WTC11 (cell line): ENCODE measurements at regions of chr4 and their contacts with region 1.

Region 1: GRCh38 chr4:8267077-8267476 is 2.5 kb upstream of the HTRA3 start:
- DNase-seq: peak; percentile 78
- ATAC-seq: peak; percentile 68
- H3K4me3 Mint-ChIP-seq: no peak overlapping the region
- H3K27ac Mint-ChIP-seq: no peak overlapping the region
- H3K4me1 Mint-ChIP-seq: peaks cover 7% of the 10 kb centered on the region; the same call in 1 of the 2 replicates
- H3K27me3 Mint-ChIP-seq: peaks cover 30% of the 10 kb centered on the region
- CTCF ChIP-seq: peak; percentile 65

Region 2: GRCh38 chr4:8241895-8242696 is 25.0 kb before region 1 on chr4:
- CTCF ChIA-PET with region 1: interaction called, 16 read pairs
- POLR2A ChIA-PET with region 1: no interaction called
- DNase-seq: peak; percentile 95
- ATAC-seq: peak; percentile 89
- H3K4me3 Mint-ChIP-seq: no peak overlapping the region
- H3K27ac Mint-ChIP-seq: no peak overlapping the region
- H3K4me1 Mint-ChIP-seq: no peaks in the 10 kb centered on the region
- H3K27me3 Mint-ChIP-seq: no peaks in the 10 kb centered on the region; the same call in 1 of the 2 replicates
- CTCF ChIP-seq: peak; percentile 96

Region 3: GRCh38 chr4:8289956-8290700 is 23.1 kb after region 1 on chr4:
- CTCF ChIA-PET with region 1: interaction called, 14 read pairs
- POLR2A ChIA-PET with region 1: no interaction called
- DNase-seq: no peak
- ATAC-seq: no peak
- H3K4me3 Mint-ChIP-seq: no peak overlapping the region
- H3K27ac Mint-ChIP-seq: no peak overlapping the region
- H3K4me1 Mint-ChIP-seq: no peaks in the 10 kb centered on the region
- H3K27me3 Mint-ChIP-seq: no peaks in the 10 kb centered on the region
- CTCF ChIP-seq: no peak

Region 4: DNA sequence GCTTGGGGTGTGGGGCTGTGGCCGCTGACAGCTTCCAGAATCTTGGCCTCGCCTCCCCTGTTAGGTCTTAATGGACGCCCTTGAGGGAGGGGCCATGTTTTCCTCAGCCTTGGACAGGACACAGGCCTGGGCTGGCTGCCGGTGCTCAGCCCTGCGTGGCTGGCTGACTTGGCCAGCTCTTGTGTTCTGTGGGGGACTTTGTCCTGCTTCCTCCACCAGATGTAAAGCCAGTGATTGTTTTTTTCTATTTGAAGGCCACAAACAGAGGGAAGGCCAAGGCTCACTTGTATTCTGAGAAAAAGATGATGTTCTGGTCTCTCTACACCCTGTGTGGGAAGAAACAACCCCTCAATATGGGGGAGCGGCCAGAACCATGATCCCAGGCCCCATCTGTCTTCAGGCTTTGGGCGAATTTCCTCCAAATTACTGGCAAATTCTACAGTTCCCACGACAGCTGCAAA is 73.7 kb after region 1 on chr4:
- CTCF ChIA-PET with region 1: interaction called, 15 read pairs
- POLR2A ChIA-PET with region 1: no interaction called
- DNase-seq: no peak
- ATAC-seq: no peak
- H3K4me3 Mint-ChIP-seq: no peak overlapping the region
- H3K27ac Mint-ChIP-seq: no peak overlapping the region
- H3K4me1 Mint-ChIP-seq: peaks cover 7% of the 10 kb centered on the region
- H3K27me3 Mint-ChIP-seq: peaks cover 5% of the 10 kb centered on the region; the same call in 1 of the 2 replicates
- CTCF ChIP-seq: no peak

Region 5: DNA sequence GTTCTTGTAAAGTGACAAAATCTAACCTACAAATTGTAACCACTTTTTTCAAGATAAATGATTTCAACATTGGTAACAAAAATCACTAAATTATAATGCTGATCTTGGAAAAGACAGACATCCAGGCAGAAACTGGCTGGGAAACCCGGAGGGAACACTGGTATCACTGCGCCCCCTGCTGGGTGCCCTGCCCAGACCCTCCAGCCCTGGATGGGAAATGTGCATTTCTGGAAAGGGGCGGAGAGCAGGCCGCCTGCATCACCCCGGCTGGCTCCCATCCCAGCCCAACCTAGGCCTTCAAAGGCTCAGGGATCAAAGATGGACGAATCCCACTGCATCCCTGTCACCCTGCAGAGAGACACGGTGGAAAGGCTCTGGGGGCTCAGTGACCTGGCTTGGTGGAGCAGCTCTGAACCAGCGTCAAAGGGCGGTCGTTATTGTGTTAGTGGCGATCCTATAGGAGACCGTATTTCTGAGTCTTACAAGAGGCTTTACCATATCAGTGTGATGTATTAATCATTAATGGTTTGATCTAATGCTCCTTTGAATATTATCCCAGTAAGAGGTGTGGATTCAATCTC is 136.2 kb after region 1 on chr4:
- CTCF ChIA-PET with region 1: interaction called, 32 read pairs
- POLR2A ChIA-PET with region 1: no interaction called
- DNase-seq: peak; percentile 88
- ATAC-seq: peak; percentile 93
- H3K4me3 Mint-ChIP-seq: no peak overlapping the region
- H3K27ac Mint-ChIP-seq: peak overlapping the region; percentile 86
- H3K4me1 Mint-ChIP-seq: peaks cover 4% of the 10 kb centered on the region; the same call in 1 of the 2 replicates
- H3K27me3 Mint-ChIP-seq: peaks cover 2% of the 10 kb centered on the region; the same call in 1 of the 2 replicates
- CTCF ChIP-seq: peak; percentile 68; the same call in 1 of the 2 replicates

Region 6: GRCh38 chr4:8410641-8411271 is 143.7 kb after region 1 on chr4:
- CTCF ChIA-PET with region 1: interaction called, 19 read pairs
- POLR2A ChIA-PET with region 1: no interaction called
- DNase-seq: peak; percentile 85
- ATAC-seq: peak; percentile 92
- H3K4me3 Mint-ChIP-seq: no peak overlapping the region
- H3K27ac Mint-ChIP-seq: peak overlapping the region; percentile 95
- H3K4me1 Mint-ChIP-seq: peaks cover 9% of the 10 kb centered on the region
- H3K27me3 Mint-ChIP-seq: peaks cover 2% of the 10 kb centered on the region; the same call in 1 of the 2 replicates
- CTCF ChIP-seq: no peak